ENCODE measurements at regions of chr12 and their contacts with region 1.

Region 1: GRCh38 chr12:128644664-128645296 is 179.0 kb downstream of the SLC15A4 start:
- DNase-seq: peak in 4 of 10 donors; percentile 13 to 66 (median 42)
- H3K4me3 ChIP-seq: no peak overlapping the region
- H3K27ac ChIP-seq: no peak overlapping the region
- H3K27me3 ChIP-seq: peaks cover 0 to 4% (median 0%) of the 10 kb centered on the region in 45 donors
- CTCF ChIP-seq: peak; percentile 25 to 75 (median 60)

Region 2: DNA sequence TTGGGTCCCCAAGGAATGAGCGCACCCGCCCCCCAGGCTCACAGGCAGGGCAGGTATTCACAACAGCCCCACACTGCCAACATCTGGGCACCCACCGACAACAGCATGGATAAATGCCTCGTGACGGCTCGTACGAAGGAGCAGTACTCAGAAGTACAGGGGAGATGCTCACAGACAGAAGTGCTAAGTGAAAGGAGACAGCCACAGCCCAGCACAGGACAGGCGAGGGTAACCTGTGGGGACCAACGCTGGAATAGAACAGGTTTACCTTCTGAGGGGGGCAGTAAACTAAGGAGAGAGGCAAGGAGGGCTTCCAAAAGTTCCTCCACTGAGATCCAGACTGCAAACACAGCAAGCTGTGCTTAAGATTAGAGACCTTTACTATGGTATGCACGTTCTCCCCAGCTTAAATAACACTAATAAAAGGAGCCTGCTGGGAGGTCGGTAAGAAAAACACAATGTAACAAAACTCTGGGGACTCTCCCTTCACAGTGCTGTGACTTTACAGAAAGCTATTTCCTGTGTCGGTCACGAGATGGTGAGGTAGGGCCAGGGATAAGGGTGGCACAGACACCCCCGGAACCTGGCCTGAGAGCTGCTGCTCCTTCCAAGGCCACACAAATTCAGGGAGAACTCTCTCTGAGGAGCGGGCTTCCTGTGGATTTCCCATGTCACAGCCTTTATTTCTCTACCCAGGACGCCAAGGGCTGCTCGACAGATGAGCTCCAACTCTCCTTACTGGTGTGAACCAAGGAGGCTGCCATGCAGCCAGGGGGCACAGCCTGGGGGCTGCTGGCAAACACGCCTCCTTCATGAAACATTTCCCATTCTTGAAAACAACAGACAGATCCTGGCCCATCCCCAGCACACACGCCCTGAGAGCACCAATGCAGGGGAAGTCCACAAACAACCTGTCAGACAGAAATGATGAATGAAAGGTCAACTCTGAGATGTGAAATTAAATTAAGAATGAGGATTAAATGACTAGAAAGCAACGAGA is 152.6 kb after region 1 on chr12:
- intact Hi-C with region 1: loop called in 1 of 2 experiments (anchors 10 kb)
- DNase-seq: no peak
- H3K4me3 ChIP-seq: no peak overlapping the region
- H3K27ac ChIP-seq: peak overlapping the region in 34 of 59 donors; percentile 3 to 72 (median 30)
- H3K27me3 ChIP-seq: no peaks in the 10 kb centered on the region
- CTCF ChIP-seq: no peak

Region 3: DNA sequence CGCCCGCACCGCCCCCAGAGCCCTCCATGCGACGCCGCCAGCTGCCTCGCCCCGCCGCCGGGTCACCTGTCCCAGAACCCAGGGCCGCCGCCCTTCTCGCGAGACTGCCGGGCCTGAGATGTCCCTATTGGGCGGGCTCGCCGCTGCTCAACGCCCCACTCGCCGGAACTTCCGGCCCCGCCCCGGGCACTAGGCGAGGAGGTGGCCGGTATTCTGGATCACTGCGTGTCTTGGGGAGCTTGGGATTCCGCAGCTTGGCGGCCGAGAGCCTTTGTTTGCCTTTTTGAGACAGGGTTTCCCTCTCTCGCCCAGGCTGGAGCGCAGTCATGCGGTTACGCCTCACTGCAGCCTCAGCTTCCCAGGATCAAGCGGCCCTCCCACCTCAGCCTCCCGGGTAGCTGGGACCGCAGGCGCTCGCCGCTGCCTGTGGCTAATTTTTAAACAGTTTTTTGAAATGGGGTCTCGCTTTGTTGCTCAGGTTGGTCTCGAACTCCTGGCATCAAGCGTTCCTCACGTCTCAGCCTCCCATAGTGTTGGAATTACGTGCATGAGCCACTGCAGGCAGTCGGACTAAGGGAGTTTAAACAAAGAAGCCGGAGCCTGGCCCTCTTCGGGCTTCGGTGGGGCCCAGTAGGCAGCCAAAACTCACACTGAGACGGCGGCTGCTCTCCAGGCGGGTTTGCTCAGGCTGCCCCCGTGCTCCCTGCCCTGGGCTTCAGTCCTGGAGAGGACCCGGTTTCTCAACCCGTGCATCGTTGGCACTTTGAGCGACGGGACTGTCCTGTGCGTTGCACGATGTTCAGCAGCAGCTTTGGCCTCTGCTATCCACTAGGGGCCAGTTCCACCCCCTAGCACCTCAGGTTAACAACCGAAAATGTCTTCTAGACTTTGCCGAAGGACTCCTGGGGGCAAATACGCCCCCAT is 179.4 kb after region 1 on chr12 and contains the start of gene SLC15A4:
- intact Hi-C with region 1: loop called in 1 of 2 experiments (anchors 5 kb)
- DNase-seq: peak; percentile 91 to 98 (median 96)
- H3K4me3 ChIP-seq: peak within 1 kb of the TSS; percentile 66 to 98 (median 90)
- H3K27ac ChIP-seq: peak within 1 kb of the TSS; percentile 43 to 96 (median 86)
- H3K27me3 ChIP-seq: no peaks in the 10 kb centered on the region
- CTCF ChIP-seq: peak in 12 of 56 donors; percentile 5 to 41 (median 10)
- total RNA-seq, gene SLC15A4: 19.4 to 39.0 (median 27.8) TPM

Region 4: GRCh38 chr12:130013771-130014484 is 1369.1 kb after region 1 on chr12:
- intact Hi-C with region 1: loop called in 1 of 2 experiments (anchors 10 kb)
- DNase-seq: peak; percentile 67 to 91 (median 88)
- H3K4me3 ChIP-seq: peak overlapping the region in 56 of 59 donors; percentile 5 to 58 (median 38)
- H3K27ac ChIP-seq: peak overlapping the region in 16 of 59 donors; percentile 9 to 70 (median 42)
- H3K27me3 ChIP-seq: peaks cover 0 to 5% (median 0%) of the 10 kb centered on the region in 45 donors
- CTCF ChIP-seq: peak; percentile 54 to 90 (median 78)